ENCODE measurements at regions of chrX and their contacts with region 1.

Region 1: GRCh38 chrX:155216179-155216939 is at the start of gene VBP1:
- DNase-seq: peak; percentile 61 to 89 (median 84)
- ATAC-seq: peak; percentile 99
- H3K4me3 ChIP-seq: peak within 1 kb of the TSS; percentile 73
- H3K4me3 Mint-ChIP-seq: peak within 1 kb of the TSS; percentile 86 to 98 (median 96)
- H3K27ac ChIP-seq: peak within 1 kb of the TSS; percentile 79
- H3K27ac Mint-ChIP-seq: peak within 1 kb of the TSS; percentile 76 to 96 (median 91)
- H3K4me1 ChIP-seq: peaks cover 8 to 16% of the 10 kb centered on the region in 2 donors
- H3K4me1 Mint-ChIP-seq: peaks cover 10 to 36% (median 26%) of the 10 kb centered on the region in 7 donors
- H3K27me3 ChIP-seq: no peaks in the 10 kb centered on the region
- H3K27me3 Mint-ChIP-seq: no peaks in the 10 kb centered on the region
- total RNA-seq, gene VBP1: 17.3 to 57.4 (median 26.4) TPM

Region 2: DNA sequence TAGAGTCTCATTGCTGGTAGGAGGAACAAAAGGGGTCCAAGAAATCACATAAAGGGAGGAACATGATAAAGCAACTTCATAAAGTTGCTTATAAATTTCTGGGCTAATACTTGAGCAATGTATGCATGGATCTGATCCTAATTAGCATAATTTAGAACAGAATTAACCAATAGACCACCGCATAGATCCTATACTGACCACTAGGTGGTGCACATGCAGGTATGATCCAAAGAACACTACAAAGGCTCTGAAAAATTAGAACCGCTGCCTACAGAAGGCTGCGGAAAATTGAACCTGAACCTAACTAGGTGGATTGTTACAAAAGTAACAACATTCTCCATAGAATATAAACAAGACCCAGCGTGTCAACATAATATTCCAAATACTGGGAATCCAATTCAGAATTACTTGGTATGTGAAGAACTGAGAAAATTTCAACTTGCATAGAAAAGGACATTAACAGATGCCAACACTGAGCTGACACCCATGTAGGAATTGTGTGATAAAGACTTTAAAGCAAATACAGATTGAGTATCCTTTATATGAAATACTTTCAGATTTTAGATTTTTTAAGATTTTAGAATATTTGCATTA is 121.8 kb before region 1 on chrX:
- CTCF ChIA-PET with region 1: interaction called, 13 read pairs
- POLR2A ChIA-PET with region 1: no interaction called
- intact Hi-C with region 1: loop called (anchors 1 to 5 kb)
- DNase-seq: peak in 7 of 9 donors; percentile 18 to 57 (median 39)
- ATAC-seq: peak; percentile 87
- H3K4me3 ChIP-seq: no peak overlapping the region
- H3K4me3 Mint-ChIP-seq: no peak overlapping the region
- H3K27ac ChIP-seq: no peak overlapping the region
- H3K27ac Mint-ChIP-seq: peak overlapping the region in 1 of 9 donors; percentile 9
- H3K4me1 ChIP-seq: no peaks in the 10 kb centered on the region
- H3K4me1 Mint-ChIP-seq: peaks cover 0 to 5% (median 4%) of the 10 kb centered on the region in 7 donors
- H3K27me3 ChIP-seq: no peaks in the 10 kb centered on the region
- H3K27me3 Mint-ChIP-seq: no peaks in the 10 kb centered on the region

Region 3: DNA sequence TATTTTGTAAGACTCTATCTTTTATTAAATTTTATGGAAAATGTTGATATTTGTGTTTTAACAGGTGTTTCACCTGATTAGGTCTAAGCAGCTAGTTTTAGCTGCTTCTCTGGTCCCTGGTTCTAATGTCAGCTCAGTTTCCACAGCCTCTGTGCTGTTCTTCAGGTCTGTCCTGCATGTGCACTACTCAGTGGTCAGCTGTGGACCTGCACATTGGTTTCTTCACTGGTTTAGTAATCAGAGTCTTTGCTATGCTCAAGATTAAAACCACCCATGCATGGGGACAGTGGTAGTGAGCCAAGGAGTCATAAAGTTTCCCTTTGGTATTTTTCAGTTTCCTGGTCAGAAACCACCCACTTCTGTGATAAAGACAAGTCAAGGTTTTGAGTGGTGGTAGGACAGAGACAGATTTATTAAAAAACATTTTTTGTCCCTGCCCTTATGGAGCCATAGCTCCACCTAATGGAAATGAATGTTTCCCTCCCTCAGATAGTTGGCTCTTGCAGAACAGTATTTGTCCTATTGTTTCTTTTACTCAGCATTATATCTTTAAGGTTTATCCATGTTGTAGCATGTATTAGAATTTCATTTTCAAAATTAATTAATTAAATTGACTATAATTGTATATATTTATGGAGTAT is 36.9 kb before region 1 on chrX:
- CTCF ChIA-PET with region 1: interaction called, 6 read pairs
- POLR2A ChIA-PET with region 1: no interaction called
- intact Hi-C with region 1: loop called in 1 of 2 experiments (anchors 5 kb)
- DNase-seq: no peak
- ATAC-seq: no peak
- H3K4me3 ChIP-seq: no peak overlapping the region
- H3K4me3 Mint-ChIP-seq: no peak overlapping the region
- H3K27ac ChIP-seq: no peak overlapping the region
- H3K27ac Mint-ChIP-seq: no peak overlapping the region
- H3K4me1 ChIP-seq: no peaks in the 10 kb centered on the region
- H3K4me1 Mint-ChIP-seq: no peaks in the 10 kb centered on the region
- H3K27me3 ChIP-seq: no peaks in the 10 kb centered on the region
- H3K27me3 Mint-ChIP-seq: no peaks in the 10 kb centered on the region

Region 4: DNA sequence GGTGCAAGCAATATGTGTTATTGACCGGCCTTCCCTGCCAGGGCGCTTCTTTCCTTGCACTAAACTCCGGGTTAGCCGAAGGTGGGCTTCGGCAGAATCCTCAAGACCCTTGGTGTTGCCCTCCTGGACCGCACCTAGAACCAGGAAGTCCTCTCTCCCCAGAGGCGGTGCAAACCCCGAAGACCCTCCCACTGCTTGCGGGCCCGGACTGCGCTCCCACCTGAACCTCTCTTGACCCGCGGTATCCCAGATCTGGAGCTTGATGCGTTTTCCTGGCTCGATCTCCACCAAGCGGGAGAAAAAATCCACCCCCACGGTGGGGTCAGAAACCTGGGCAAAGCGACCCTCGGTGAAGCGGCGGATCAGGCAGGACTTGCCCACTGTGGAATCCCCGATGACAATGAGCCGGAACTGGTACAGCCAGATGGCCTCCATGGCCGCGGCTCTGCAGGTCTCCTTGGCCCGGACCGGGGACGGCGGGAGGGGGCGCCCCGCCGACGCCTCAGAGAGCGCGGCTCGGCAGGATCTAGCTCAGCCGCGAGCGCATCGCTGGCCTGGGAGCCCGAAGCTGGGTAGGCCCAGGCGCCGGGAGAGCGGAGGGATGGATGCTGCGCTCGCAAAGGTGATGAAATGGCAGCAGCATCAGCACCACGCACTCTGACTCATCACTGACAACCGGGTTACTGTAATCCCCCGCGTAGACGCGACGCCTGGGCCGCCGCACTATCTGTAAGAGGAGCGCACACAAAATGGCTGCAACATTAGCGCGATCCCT is 47.7 kb after region 1 on chrX and contains the start of gene RAB39B:
- CTCF ChIA-PET with region 1: interaction called, 6 read pairs
- POLR2A ChIA-PET with region 1: interaction called, 7 read pairs
- intact Hi-C with region 1: loop called (anchors 1 to 2 kb)
- DNase-seq: peak; percentile 24 to 78 (median 62)
- ATAC-seq: peak; percentile 95
- H3K4me3 ChIP-seq: peak within 1 kb of the TSS; percentile 76
- H3K4me3 Mint-ChIP-seq: peak within 1 kb of the TSS; percentile 72 to 91 (median 78)
- H3K27ac ChIP-seq: peak within 1 kb of the TSS; percentile 93
- H3K27ac Mint-ChIP-seq: peak within 1 kb of the TSS; percentile 42 to 92 (median 85)
- H3K4me1 ChIP-seq: peaks cover 5 to 6% of the 10 kb centered on the region in 2 donors
- H3K4me1 Mint-ChIP-seq: peaks cover 3 to 38% (median 27%) of the 10 kb centered on the region in 7 donors
- H3K27me3 ChIP-seq: no peaks in the 10 kb centered on the region
- H3K27me3 Mint-ChIP-seq: no peaks in the 10 kb centered on the region
- total RNA-seq, gene RAB39B: 3.9 to 13.3 (median 10.3) TPM

Measured in naive thymus-derived CD4-positive, alpha-beta T cell (primary cell).